HepG2 (cell line): ENCODE measurements at regions of chr6 and their contacts with region 1.

Region 1: GRCh38 chr6:13827032-13827431 is 12.7 kb upstream of the MCUR1 start:
- DNase-seq: no peak
- ATAC-seq: no peak
- H3K4me3 ChIP-seq: no peak overlapping the region
- H3K27ac ChIP-seq: peak overlapping the region; percentile 7
- H3K4me1 ChIP-seq: peaks cover 47% of the 10 kb centered on the region
- H3K27me3 ChIP-seq: peaks cover 0 to 1% of the 10 kb centered on the region in 2 experiments; a peak in 1 of 5 replicates
- CTCF ChIP-seq: no peak
- EP300 ChIP-seq: no peak
- POLR2A ChIP-seq: no peak
- RAD21 ChIP-seq: no peak

Region 2: GRCh38 chr6:13814176-13814937 is 12.7 kb before region 1 on chr6 and contains the start of gene MCUR1:
- CTCF ChIA-PET with region 1: no interaction called
- POLR2A ChIA-PET with region 1: interaction called, 29 read pairs
- in situ Hi-C with region 1: no loop called
- intact Hi-C with region 1: no loop called
- DNase-seq: peak; percentile 77
- ATAC-seq: peak; percentile 86
- H3K4me3 ChIP-seq: peak within 1 kb of the TSS; percentile 74 to 92 (median 84)
- H3K27ac ChIP-seq: peak within 1 kb of the TSS; percentile 94
- H3K4me1 ChIP-seq: peaks cover 54% of the 10 kb centered on the region
- H3K27me3 ChIP-seq: no peaks in the 10 kb centered on the region
- CTCF ChIP-seq: peak; percentile 66
- EP300 ChIP-seq: no peak
- POLR2A ChIP-seq: peak; percentile 87 to 89
- RAD21 ChIP-seq: peak; percentile 66
- total RNA-seq, gene MCUR1: 27.6 and 29.6 TPM in 2 replicates